SK-N-SH (cell line): ENCODE measurements at regions of chr9 and their contacts with region 1.

Region 1: GRCh38 chr9:132507746-132508469 is 74.5 kb upstream of the BARHL1 start:
- DNase-seq: peak; percentile 92
- H3K4me3 ChIP-seq: no peak overlapping the region; a peak in 2 of 4 replicates
- H3K27ac ChIP-seq: peak overlapping the region in 1 of 2 experiments; percentile 97; a peak in 2 of 4 replicates
- H3K4me1 ChIP-seq: peaks cover 0 to 56% of the 10 kb centered on the region in 2 experiments; a peak in 2 of 4 replicates
- H3K27me3 ChIP-seq: no peaks in the 10 kb centered on the region
- CTCF ChIP-seq: peak; percentile 84
- EP300 ChIP-seq: no peak
- RAD21 ChIP-seq: peak; percentile 90

Region 2: DNA sequence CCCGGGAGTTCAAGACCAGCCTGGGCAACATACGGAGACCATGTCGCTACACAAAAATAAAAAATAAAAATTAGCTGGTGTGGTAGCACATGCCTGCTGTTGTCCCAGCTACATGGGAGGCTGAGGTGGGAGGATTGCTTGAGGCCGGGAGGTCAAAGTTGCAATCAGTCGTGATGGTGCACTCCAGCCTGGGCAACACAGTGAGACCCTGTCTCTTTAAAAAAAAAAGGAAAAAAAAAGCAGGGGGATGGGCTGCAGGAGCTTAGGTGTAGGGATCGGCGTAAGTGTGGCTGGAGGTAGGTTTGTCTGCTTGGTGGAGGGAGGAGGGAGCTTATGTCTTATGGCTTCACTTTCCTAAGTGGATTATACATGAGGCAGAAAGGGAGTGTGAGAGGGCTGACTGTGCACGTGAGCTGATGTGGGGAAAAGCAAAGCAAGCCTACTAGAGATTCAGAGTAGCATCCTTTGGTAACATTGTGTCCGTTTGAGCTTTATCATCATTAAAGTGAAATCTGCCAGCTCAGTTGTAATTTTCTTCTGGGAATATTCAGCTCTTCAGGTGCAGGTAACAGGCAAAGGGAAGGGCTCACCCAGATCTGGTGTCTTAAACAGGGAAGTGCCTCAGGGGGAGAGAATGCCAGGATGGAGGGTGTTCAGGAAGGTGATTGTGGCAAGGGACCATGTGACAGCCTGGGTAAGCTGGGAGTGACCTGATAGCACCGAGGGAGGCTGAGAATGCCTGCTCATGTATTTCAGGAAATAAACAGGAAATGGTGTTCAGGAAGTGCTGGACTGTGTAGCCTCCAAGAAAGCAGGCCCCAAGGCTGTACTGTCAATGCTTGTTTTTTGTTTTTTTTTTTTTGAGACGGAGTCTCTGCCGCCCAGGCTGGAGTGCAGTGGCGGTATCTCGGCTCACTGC is 135.5 kb before region 1 on chr9:
- CTCF ChIA-PET with region 1: no interaction called
- POLR2A ChIA-PET with region 1: no interaction called
- DNase-seq: peak; percentile 58
- H3K4me3 ChIP-seq: no peak overlapping the region
- H3K27ac ChIP-seq: peak overlapping the region in 1 of 2 experiments; percentile 8; a peak in 1 of 4 replicates
- H3K4me1 ChIP-seq: peaks cover 0 to 5% of the 10 kb centered on the region in 2 experiments; a peak in 1 of 4 replicates
- H3K27me3 ChIP-seq: no peaks in the 10 kb centered on the region
- CTCF ChIP-seq: no peak
- EP300 ChIP-seq: no peak
- RAD21 ChIP-seq: no peak

Region 3: GRCh38 chr9:132411091-132411508 is 96.8 kb before region 1 on chr9:
- CTCF ChIA-PET with region 1: interaction called, 72 read pairs
- POLR2A ChIA-PET with region 1: no interaction called
- DNase-seq: peak; percentile 67
- H3K4me3 ChIP-seq: no peak overlapping the region; a peak in 2 of 4 replicates
- H3K27ac ChIP-seq: no peak overlapping the region
- H3K4me1 ChIP-seq: peaks cover 0 to 21% of the 10 kb centered on the region in 2 experiments; a peak in 2 of 4 replicates
- H3K27me3 ChIP-seq: no peaks in the 10 kb centered on the region
- CTCF ChIP-seq: peak; percentile 53
- EP300 ChIP-seq: no peak
- RAD21 ChIP-seq: peak; percentile 71

Region 4: GRCh38 chr9:132546148-132547051 is 38.5 kb after region 1 on chr9:
- CTCF ChIA-PET with region 1: interaction called, 60 read pairs
- POLR2A ChIA-PET with region 1: interaction called, 3 read pairs
- DNase-seq: peak; percentile 96
- H3K4me3 ChIP-seq: peak overlapping the region; percentile 24 to 29; a peak in 3 of 4 replicates
- H3K27ac ChIP-seq: peak overlapping the region in 1 of 2 experiments; percentile 85; a peak in 2 of 4 replicates
- H3K4me1 ChIP-seq: peaks cover 0 to 49% of the 10 kb centered on the region in 2 experiments; a peak in 1 of 4 replicates
- H3K27me3 ChIP-seq: no peaks in the 10 kb centered on the region
- CTCF ChIP-seq: peak; percentile 51
- EP300 ChIP-seq: peak in 1 of 2 experiments; percentile 91; a peak in 2 of 4 replicates
- RAD21 ChIP-seq: no peak; the same call in 1 of the 2 replicates

Region 5: GRCh38 chr9:132560616-132561202 is 52.8 kb after region 1 on chr9:
- CTCF ChIA-PET with region 1: interaction called, 11 read pairs
- POLR2A ChIA-PET with region 1: no interaction called
- DNase-seq: peak; percentile 47
- H3K4me3 ChIP-seq: no peak overlapping the region
- H3K27ac ChIP-seq: peak overlapping the region in 1 of 2 experiments; percentile 34; a peak in 2 of 4 replicates
- H3K4me1 ChIP-seq: peaks cover 0 to 16% of the 10 kb centered on the region in 2 experiments; a peak in 1 of 4 replicates
- H3K27me3 ChIP-seq: no peaks in the 10 kb centered on the region; the same call in 1 of the 2 replicates
- CTCF ChIP-seq: no peak
- EP300 ChIP-seq: no peak
- RAD21 ChIP-seq: no peak